ENCODE measurements at regions of chr3 and their contacts with region 1.

Region 1: GRCh38 chr3:137013955-137014688 is 56.3 kb downstream of the IL20RB start:
- DNase-seq: peak; percentile 89
- H3K4me3 Mint-ChIP-seq: peak overlapping the region; percentile 55
- H3K27ac Mint-ChIP-seq: no peak overlapping the region
- H3K4me1 Mint-ChIP-seq: peaks cover 7% of the 10 kb centered on the region
- H3K27me3 Mint-ChIP-seq: no peaks in the 10 kb centered on the region

Region 2: DNA sequence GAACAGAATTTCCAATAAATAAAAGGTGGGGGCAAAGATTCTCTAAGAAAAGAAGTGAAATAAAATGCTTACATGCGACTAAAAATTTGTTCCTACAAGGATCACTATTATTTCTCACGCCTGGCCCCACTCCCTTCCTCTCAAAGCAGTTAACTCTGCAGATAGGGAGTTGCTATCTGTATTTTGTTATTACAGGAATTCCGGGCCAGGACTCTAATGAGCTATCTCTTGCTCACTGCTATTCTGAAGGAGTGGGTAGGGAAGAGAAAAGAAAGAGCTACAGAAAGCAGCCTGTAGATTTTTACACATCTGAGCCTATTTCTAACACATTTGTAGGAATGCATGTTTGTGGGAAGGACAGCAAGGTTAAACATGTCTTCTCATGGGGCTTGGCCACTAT is 623.5 kb before region 1 on chr3:
- CTCF ChIA-PET with region 1: interaction called, 44 read pairs
- POLR2A ChIA-PET with region 1: no interaction called
- intact Hi-C with region 1: loop called (anchors 1 kb)
- DNase-seq: no peak
- H3K4me3 Mint-ChIP-seq: no peak overlapping the region
- H3K27ac Mint-ChIP-seq: no peak overlapping the region
- H3K4me1 Mint-ChIP-seq: peaks cover 1% of the 10 kb centered on the region
- H3K27me3 Mint-ChIP-seq: no peaks in the 10 kb centered on the region

Region 3: DNA sequence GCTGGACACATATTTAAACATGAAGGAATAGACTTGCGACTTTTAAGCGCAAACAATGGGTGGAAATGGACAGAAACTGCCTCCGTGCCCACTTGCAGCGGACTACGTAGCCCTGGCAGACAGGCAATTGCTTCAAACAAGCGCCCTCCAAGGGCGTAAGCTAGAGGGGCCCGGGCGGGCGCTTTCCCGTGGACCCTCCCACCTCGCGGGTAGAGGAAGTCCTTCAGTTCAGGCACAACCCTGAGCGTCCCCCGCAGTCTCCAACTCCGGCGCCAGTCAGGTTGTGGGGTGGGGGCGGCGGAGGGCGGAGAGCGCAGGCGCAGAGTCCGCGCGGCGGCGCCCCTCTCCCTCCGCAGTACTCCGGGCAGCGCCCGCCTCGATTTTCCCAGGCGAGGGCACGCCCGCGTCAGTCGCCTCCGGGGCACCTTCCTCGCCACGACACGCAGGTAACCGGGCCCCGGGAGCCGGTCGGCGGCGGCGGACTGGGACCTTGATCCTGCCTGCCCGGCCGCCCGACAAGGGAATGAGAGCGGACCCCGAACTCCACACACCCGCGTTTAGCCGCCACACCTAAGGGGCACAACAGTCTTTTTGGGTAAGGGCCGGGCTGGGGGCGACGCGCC is 195.2 kb before region 1 on chr3 and contains the start of gene SLC35G2:
- CTCF ChIA-PET with region 1: interaction called, 3 read pairs
- POLR2A ChIA-PET with region 1: no interaction called
- intact Hi-C with region 1: loop called (anchors 1 kb)
- DNase-seq: peak; percentile 50
- H3K4me3 Mint-ChIP-seq: peak within 1 kb of the TSS; percentile 78
- H3K27ac Mint-ChIP-seq: no peak within 1 kb of the TSS
- H3K4me1 Mint-ChIP-seq: peaks cover 19% of the 10 kb centered on the region
- H3K27me3 Mint-ChIP-seq: peaks cover 34% of the 10 kb centered on the region
- total RNA-seq, gene SLC35G2: 2.1 to 2.9 TPM

Region 4: DNA sequence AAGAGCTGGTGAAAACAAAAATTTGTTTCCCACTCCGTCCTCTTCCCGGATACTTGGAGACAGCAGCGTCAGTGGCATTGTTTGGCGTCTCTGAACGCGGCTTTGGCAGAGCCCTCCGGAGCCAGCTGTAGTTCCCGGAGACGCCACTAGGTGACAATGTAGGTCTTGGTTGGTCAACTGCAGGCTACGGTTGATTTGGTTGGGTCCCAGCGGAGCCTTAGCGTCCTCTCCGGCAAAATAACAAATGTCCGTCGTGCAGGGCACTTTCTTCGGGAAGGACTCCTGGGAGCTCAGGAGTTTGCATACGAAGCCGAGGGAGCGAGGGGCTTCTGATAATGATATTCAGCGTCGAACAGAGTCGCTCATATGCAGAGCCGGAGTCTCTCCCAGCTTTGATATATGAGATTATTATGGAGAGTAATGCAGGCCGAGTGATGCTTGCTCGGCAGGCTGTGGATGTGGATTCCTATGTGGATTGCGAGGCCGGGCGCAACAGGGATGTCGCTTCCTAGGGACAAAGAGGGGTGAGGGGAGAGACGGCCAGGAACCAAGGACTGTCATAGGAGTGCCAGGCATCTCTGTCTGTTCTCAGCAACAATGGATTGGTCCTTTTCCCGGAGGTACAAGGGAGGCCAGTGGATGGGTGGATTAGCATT is 18.5 kb after region 1 on chr3:
- CTCF ChIA-PET with region 1: interaction called, 18 read pairs
- POLR2A ChIA-PET with region 1: no interaction called
- intact Hi-C with region 1: no loop called
- DNase-seq: peak; percentile 86
- H3K4me3 Mint-ChIP-seq: peak overlapping the region; percentile 19
- H3K27ac Mint-ChIP-seq: no peak overlapping the region
- H3K4me1 Mint-ChIP-seq: peaks cover 8% of the 10 kb centered on the region
- H3K27me3 Mint-ChIP-seq: peaks cover 22% of the 10 kb centered on the region

Measured in activated CD4-positive, alpha-beta memory T cell treated with anti-CD3 and anti-CD28 coated beads for 36 hours (primary cell).